ENCODE measurements at regions of chr1 and their contacts with region 1.

Region 1: DNA sequence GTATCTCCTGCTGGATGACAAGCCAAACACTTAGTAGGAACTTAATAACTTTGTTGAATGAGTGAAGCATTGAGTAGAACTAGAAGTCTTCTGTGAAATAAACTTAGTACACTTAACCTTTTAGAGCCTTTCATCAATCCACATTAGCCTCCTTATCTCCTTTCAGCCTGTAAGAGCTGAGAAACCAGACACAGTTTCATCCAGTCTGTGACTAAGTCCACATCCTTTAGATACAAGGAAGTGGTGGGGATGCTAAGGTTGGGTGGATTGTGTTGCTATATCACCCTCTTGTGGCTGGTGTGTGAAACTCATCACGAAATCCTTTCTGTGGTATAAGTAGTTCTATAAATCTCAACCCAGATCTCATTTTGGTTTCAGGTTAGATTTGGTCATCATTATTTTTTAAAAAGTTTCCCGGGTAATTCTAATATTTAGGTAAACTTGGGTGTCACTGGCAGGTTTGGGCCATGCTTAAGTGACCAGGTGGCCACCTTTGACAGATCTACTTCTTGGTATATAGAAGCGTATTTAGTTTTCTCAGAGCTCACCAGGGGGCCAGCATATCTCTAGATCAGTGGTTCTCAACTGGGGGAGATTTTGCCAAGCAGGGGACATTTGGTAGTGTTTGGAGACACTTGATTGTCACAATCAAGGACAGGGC is 27.8 kb upstream of the CD84 start:
- DNase-seq: peak; percentile 57 to 67
- H3K4me3 ChIP-seq: no peak overlapping the region
- H3K4me3 Mint-ChIP-seq: no peak overlapping the region
- H3K27ac Mint-ChIP-seq: no peak overlapping the region
- H3K4me1 ChIP-seq: no peaks in the 10 kb centered on the region
- H3K4me1 Mint-ChIP-seq: no peaks in the 10 kb centered on the region
- H3K27me3 ChIP-seq: no peaks in the 10 kb centered on the region
- H3K27me3 Mint-ChIP-seq: peaks cover 3% of the 10 kb centered on the region
- CTCF ChIP-seq: peak; percentile 69 to 71

Region 2: DNA sequence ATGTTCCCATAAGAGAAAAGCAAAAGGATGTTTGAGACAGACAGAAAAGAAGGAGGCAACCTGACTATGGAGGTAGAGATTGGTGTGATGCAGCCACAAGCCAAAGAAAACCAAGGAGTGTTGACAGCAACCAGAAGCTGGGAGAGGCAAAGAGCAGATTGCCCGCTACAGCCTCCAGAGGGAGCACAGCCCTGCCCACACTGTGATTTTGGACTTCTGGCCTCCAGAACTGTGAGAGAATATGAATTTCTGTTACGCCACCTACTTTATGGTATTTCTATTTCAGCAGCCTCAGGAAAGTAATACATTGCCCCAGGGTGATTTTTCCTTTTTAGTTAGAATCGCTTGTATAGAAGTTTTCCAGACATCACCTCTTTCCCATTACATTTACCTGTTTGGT is 112.5 kb before region 1 on chr1:
- CTCF ChIA-PET with region 1: no interaction called
- POLR2A ChIA-PET with region 1: no interaction called
- intact Hi-C with region 1: loop called (anchors 1 kb)
- DNase-seq: peak in 1 of 2 experiments; percentile 51
- H3K4me3 ChIP-seq: no peak overlapping the region
- H3K4me3 Mint-ChIP-seq: no peak overlapping the region
- H3K27ac Mint-ChIP-seq: no peak overlapping the region
- H3K4me1 ChIP-seq: no peaks in the 10 kb centered on the region
- H3K4me1 Mint-ChIP-seq: no peaks in the 10 kb centered on the region
- H3K27me3 ChIP-seq: no peaks in the 10 kb centered on the region
- H3K27me3 Mint-ChIP-seq: peaks cover 3% of the 10 kb centered on the region
- CTCF ChIP-seq: peak; percentile 54 to 71

Region 3: DNA sequence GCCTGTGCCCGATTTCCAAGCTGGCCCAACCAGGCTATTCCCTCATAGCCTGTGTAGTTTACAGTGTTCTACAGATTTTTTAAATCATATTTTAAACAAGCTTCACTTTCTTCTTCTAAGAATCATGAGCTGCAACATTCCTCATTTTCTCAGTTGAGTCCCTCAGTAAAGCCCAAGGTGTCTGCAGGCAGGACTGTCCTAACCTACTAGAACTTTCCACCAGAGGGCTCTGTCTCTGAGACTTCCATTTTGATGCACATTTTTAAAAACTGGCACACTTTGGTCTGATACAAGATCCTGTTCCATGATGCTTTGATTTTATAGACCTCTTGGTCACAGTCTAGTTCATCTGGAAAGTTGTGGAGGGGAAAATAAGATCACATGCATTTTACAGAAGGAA is 62.5 kb before region 1 on chr1:
- CTCF ChIA-PET with region 1: no interaction called
- POLR2A ChIA-PET with region 1: no interaction called
- intact Hi-C with region 1: loop called (anchors 1 kb)
- DNase-seq: peak in 1 of 2 experiments; percentile 36
- H3K4me3 ChIP-seq: no peak overlapping the region
- H3K4me3 Mint-ChIP-seq: no peak overlapping the region
- H3K27ac Mint-ChIP-seq: no peak overlapping the region
- H3K4me1 ChIP-seq: peaks cover 25% of the 10 kb centered on the region
- H3K4me1 Mint-ChIP-seq: peaks cover 23% of the 10 kb centered on the region
- H3K27me3 ChIP-seq: no peaks in the 10 kb centered on the region
- H3K27me3 Mint-ChIP-seq: no peaks in the 10 kb centered on the region
- CTCF ChIP-seq: peak; percentile 18 to 37

Region 4: GRCh38 chr1:160590488-160590887 is 16.7 kb before region 1 on chr1:
- CTCF ChIA-PET with region 1: no interaction called
- POLR2A ChIA-PET with region 1: no interaction called
- intact Hi-C with region 1: no loop called
- DNase-seq: no peak
- H3K4me3 ChIP-seq: no peak overlapping the region
- H3K4me3 Mint-ChIP-seq: no peak overlapping the region
- H3K27ac Mint-ChIP-seq: no peak overlapping the region
- H3K4me1 ChIP-seq: no peaks in the 10 kb centered on the region
- H3K4me1 Mint-ChIP-seq: no peaks in the 10 kb centered on the region
- H3K27me3 ChIP-seq: no peaks in the 10 kb centered on the region
- H3K27me3 Mint-ChIP-seq: peaks cover 9% of the 10 kb centered on the region
- CTCF ChIP-seq: no peak